ENCODE measurements at regions of chr11 and their contacts with region 1.

Region 1: GRCh38 chr11:125887373-125888324 is at the start of gene HYLS1:
- DNase-seq: peak; percentile 99
- H3K4me3 Mint-ChIP-seq: peak within 1 kb of the TSS; percentile 82
- H3K27ac Mint-ChIP-seq: peak within 1 kb of the TSS; percentile 96
- H3K4me1 Mint-ChIP-seq: peaks cover 42% of the 10 kb centered on the region
- H3K27me3 Mint-ChIP-seq: no peaks in the 10 kb centered on the region
- total RNA-seq, gene HYLS1: 14.0 to 15.5 TPM

Region 2: DNA sequence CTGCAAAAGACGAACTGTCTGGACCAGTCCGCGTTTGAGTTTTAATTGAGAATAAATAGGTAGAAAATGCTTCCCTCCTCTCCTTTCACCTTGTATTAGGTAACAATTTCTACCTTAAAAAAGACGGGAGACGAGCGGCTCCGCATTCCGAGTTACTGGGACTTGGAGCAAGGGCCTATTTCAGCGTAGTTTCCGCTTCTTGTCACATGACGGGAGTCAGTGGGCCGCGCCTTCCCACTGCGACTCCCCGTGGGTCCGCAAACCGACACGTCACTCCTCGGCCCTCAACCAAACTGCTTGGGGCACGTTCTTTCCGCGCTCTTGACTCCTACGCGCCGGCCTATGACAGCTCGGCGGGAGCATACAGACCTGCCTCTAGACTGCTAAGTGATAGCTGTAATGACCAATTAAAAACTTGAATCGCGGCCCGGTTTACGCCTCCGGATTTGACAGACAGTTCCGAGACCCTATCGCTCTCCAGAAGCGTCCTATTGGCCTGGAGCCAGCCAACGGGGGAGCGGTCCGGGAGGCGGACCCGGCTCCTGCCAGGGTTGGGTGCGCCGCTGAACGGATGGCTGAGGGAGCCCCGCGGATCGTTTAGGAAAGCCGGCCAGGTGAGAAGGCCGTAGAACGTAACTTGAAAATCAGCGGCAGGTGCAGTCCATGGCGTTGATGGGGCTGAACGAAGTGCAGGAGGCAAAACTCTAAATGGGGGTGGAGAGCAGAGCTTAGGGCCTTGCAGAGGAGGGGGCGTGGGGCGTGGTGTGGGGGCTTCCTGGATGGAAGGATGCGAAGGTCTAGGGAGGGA is 295.1 kb before region 1 on chr11 and contains the start of gene STT3A:
- CTCF ChIA-PET with region 1: interaction called, 4 read pairs
- POLR2A ChIA-PET with region 1: interaction called, 32 read pairs
- DNase-seq: peak; percentile 98
- H3K4me3 Mint-ChIP-seq: peak within 1 kb of the TSS; percentile 96
- H3K27ac Mint-ChIP-seq: peak within 1 kb of the TSS; percentile 91
- H3K4me1 Mint-ChIP-seq: peaks cover 57% of the 10 kb centered on the region
- H3K27me3 Mint-ChIP-seq: no peaks in the 10 kb centered on the region
- total RNA-seq, gene STT3A: 123 TPM

Region 3: DNA sequence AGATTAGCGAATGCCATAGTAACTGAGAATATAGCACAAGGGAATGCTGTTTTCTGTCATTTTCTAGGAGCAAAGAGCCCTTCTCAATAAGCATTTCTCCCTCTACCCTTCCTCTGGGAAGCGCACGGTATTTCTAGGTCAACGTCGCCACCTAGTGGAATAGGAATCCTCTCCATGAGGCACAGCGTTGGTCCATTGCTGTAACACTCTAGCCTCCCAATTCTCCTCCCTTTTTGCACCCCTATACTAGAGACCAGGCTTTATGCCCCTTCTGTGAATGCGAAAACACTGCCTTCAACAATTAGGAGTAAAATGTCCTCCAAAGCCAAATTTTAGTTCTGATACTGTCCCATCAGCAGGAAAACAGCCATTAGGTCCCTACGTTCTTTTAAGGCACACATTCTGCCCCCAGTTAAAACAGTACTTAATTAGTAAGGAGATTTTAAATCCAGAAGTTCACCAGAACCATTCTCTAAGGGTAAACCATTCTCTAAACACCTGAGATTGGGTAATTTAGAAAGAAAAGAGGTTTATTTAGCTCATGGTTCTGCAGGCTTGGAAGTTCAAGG is 13.0 kb before region 1 on chr11:
- CTCF ChIA-PET with region 1: interaction called, 4 read pairs
- POLR2A ChIA-PET with region 1: interaction called, 14 read pairs
- DNase-seq: peak; percentile 52
- H3K4me3 Mint-ChIP-seq: no peak overlapping the region
- H3K27ac Mint-ChIP-seq: no peak overlapping the region
- H3K4me1 Mint-ChIP-seq: no peaks in the 10 kb centered on the region
- H3K27me3 Mint-ChIP-seq: peaks cover 2% of the 10 kb centered on the region

Region 4: DNA sequence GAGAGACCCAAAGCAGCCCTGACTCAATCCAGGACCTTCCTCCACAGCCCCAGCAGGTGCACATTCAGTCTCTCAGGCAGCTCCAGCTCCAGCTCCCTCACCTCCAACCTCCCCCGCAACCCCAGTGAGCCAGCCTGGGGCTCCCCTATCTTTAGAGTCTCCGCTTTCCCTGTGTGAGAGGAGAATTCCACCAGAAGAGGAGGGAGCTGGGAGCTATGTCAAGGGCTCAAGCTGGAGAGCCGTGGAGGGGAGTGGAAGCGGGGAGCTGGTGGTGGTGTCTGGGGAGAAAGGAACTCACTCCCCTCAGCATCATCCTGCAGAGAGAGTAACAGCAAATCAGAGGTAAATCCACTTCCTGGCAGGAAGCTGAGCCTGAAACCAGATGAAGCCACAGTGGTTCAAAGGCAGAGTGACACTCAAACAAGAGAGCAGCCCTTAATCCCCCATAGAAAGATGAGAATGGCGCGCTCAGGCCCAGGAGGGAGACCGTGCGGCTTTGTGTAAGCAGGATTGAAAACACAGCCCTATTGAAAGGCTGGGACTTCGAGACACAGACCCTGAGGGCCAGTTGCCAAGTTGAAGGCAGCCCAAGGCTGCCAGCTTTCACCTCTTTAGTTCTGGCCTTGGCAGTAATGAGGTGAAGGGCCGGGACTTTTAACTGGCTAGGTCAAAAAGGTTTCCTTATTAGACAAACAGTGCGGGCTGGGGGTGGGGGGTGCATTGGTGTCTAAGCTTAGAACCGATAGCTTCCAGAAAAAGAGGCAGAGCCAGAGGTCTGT is 196.4 kb after region 1 on chr11:
- CTCF ChIA-PET with region 1: no interaction called
- POLR2A ChIA-PET with region 1: interaction called, 10 read pairs
- DNase-seq: peak; percentile 59
- H3K4me3 Mint-ChIP-seq: peak overlapping the region; percentile 24
- H3K27ac Mint-ChIP-seq: peak overlapping the region; percentile 81
- H3K4me1 Mint-ChIP-seq: peaks cover 20% of the 10 kb centered on the region
- H3K27me3 Mint-ChIP-seq: no peaks in the 10 kb centered on the region

Region 5: GRCh38 chr11:126268708-126269579 is 381.3 kb after region 1 on chr11 and contains the starts of genes FOXRED1 and SRPRA:
- CTCF ChIA-PET with region 1: no interaction called
- POLR2A ChIA-PET with region 1: interaction called, 14 read pairs
- DNase-seq: peak; percentile 100
- H3K4me3 Mint-ChIP-seq: peak within 1 kb of the TSS; percentile 98
- H3K27ac Mint-ChIP-seq: peak within 1 kb of the TSS; percentile 94
- H3K4me1 Mint-ChIP-seq: peaks cover 52% of the 10 kb centered on the region
- H3K27me3 Mint-ChIP-seq: no peaks in the 10 kb centered on the region
- total RNA-seq, gene FOXRED1: 34.4 to 36.4 TPM
- total RNA-seq, gene SRPRA: 121 to 125 TPM

Measured in activated CD4-positive, alpha-beta memory T cell treated with anti-CD3 and anti-CD28 coated beads, Interleukin-2, amount 10 ng/mL, durations not matched to agents 7 days and 5 days (primary cell).